Prostate gland (tissue), 2 donors: ENCODE measurements at regions of chr9 and their contacts with region 1.

Region 1: DNA sequence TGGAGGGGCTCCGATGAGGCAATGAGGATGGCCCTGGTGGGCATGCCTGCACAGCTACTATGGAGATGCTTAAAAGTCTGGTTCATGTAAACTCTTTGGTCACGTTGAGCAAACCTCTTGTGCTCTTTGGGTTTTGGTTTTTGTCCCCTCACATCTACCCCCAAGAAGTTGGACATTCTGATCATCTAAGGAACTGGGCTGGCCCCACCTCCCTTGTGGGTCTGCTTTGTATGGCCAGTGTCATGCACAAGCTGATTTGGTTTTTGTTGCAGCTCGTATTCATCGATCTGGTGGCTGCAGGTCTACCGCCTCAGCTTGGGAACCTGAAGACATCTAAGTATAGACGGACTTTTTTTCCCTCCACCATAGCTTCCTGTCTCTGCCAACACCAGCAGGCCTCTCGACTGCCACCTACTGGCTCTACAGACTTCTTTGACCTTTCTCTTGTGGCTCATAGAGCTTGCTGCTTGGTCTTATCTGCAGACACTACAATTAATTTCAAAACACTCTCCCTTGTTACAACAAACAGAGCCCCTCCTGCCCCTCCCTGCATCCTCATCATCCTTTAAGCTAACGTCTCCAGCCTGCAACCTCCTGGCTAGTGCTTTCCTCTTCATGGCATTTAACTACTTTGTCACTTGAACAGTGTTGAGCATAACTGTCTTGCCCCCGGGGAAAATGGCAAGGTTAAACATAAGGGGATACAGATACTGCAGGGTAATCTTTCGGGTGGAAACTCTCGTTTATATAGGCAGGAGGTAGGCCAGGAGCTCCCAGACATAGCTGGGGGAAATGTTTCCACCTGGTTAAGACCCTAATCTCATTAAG is 34.5 kb downstream of the TSTD2 start:
- DNase-seq: peak; percentile 79
- H3K4me3 ChIP-seq: no peak overlapping the region
- H3K27ac ChIP-seq: no peak overlapping the region
- H3K4me1 ChIP-seq: no peaks in the 10 kb centered on the region
- H3K27me3 ChIP-seq: no peaks in the 10 kb centered on the region
- CTCF ChIP-seq: peak; percentile 54 to 86 (median 74)
- POLR2A ChIP-seq: no peak

Region 2: GRCh38 chr9:97411789-97412625 is 186.7 kb before region 1 on chr9 and contains the start of gene TDRD7:
- intact Hi-C with region 1: loop called (anchors 5 kb)
- DNase-seq: peak; percentile 75
- H3K4me3 ChIP-seq: peak within 1 kb of the TSS; percentile 90 to 97
- H3K27ac ChIP-seq: peak within 1 kb of the TSS; percentile 82 to 83
- H3K4me1 ChIP-seq: peaks cover 6% of the 10 kb centered on the region
- H3K27me3 ChIP-seq: no peaks in the 10 kb centered on the region
- CTCF ChIP-seq: peak; percentile 97 to 99 (median 98)
- POLR2A ChIP-seq: peak; percentile 42
- total RNA-seq, gene TDRD7: 9.3 to 18.0 TPM

Region 3: GRCh38 chr9:97468658-97469448 is 129.8 kb before region 1 on chr9:
- intact Hi-C with region 1: loop called (anchors 2 kb)
- DNase-seq: peak; percentile 75
- H3K4me3 ChIP-seq: no peak overlapping the region
- H3K27ac ChIP-seq: peak overlapping the region in 1 of 2 donors; percentile 19
- H3K4me1 ChIP-seq: no peaks in the 10 kb centered on the region
- H3K27me3 ChIP-seq: no peaks in the 10 kb centered on the region
- CTCF ChIP-seq: peak; percentile 33 to 88 (median 80)
- POLR2A ChIP-seq: no peak

Region 4: DNA sequence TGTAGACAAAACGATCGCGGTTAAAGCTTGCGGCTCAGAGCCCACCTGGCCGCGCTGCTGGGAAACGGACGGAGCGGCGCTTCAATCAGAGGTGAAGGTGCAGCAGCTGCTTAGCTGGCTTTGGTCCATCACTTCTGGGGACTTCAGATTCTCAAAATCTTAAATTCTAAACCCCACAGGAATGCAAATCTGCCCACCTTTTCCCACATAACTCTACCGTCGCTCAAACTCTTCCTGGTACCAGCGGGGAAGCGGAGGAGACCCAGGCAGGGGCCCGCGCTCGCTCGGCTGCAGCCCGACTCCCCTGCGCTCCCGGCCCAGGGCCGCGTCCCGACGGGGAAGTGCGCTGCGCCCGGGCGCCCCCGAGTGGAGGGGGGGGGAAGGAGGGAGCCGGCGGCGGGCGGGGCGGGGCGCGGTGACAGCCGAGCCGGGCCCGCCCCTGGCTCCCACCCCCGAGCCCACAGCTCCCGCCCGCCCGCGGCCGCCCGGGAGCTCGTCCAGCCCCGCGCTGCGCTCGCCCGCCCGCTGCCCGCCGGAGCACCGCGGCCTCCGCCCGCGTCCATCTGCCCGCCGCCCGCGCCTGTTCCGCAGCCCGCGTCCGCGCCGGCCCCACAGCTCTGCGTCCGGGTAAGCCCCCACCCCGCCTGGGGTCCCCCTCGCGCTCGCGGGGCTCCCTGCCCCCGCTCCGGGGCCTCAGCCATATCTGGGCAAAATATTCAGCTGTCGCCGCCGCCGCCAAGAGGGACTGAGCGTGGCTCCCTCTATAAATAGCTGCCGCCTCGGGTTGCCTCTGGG is 97.3 kb before region 1 on chr9 and contains the start of gene TMOD1:
- intact Hi-C with region 1: loop called (anchors 5 kb)
- DNase-seq: peak; percentile 56
- H3K4me3 ChIP-seq: peak within 1 kb of the TSS; percentile 72 to 82
- H3K27ac ChIP-seq: peak within 1 kb of the TSS; percentile 49 to 75
- H3K4me1 ChIP-seq: peaks cover 4% of the 10 kb centered on the region
- H3K27me3 ChIP-seq: no peaks in the 10 kb centered on the region
- CTCF ChIP-seq: peak in 1 of 4 experiments; percentile 28
- POLR2A ChIP-seq: no peak
- total RNA-seq, gene TMOD1: 7.0 to 8.0 TPM

Region 5: GRCh38 chr9:97559111-97559514 is 39.6 kb before region 1 on chr9:
- intact Hi-C with region 1: loop called (anchors 2 kb)
- DNase-seq: no peak
- H3K4me3 ChIP-seq: no peak overlapping the region
- H3K27ac ChIP-seq: no peak overlapping the region
- H3K4me1 ChIP-seq: no peaks in the 10 kb centered on the region
- H3K27me3 ChIP-seq: no peaks in the 10 kb centered on the region
- CTCF ChIP-seq: no peak
- POLR2A ChIP-seq: no peak

Region 6: GRCh38 chr9:97617939-97618416 is 19.3 kb after region 1 on chr9:
- intact Hi-C with region 1: no loop called
- DNase-seq: no peak
- H3K4me3 ChIP-seq: no peak overlapping the region
- H3K27ac ChIP-seq: no peak overlapping the region
- H3K4me1 ChIP-seq: no peaks in the 10 kb centered on the region
- H3K27me3 ChIP-seq: no peaks in the 10 kb centered on the region
- CTCF ChIP-seq: no peak
- POLR2A ChIP-seq: no peak